Heart left ventricle (tissue), 16 donors: ENCODE measurements at regions of chr1 and their contacts with region 1.

Region 1: DNA sequence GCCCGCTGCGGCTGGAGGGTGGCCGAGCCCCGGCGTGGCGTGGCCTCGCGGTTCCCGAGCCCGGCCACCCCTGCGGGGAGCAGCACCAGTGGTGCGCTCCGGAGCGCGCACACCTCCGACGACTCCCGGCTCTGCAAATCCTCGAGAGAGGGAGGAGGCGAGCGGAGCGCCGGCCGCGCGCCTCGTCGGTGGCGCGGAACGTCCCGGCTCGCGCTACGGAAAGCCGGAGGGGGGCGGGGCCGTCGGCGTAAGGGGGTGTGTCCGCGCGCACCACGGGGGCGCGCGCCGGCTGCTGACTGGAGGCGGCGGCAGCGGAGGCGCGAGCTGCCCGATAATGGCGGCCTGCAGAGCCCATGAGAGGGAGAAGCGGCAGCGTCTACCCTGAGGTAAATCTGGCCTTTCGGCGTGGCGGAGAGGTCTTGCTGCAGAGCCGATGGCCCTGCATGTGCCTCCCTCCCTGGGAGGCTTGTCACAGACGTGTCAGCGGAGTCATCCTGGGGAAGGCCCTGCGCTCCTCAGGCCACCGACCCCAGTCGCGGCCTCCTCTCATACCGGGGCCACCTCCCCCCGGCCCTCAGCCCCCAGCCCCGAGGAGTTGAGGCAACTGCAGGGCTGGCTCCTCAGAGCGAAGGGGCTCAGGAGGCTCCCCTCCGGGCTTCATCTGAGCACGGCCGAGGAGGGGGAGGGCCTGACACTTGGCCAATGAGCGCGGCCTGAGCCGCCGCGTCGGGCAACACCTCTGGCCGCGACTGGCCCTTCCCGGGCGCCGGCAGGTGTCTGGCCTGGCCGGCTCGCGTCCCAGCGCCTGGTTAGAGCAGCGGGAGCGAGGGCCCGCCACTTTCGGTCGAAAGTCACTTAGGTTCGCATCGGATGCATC is at the start of gene PDIK1L:
- DNase-seq: peak; percentile 95 to 97 (median 96)
- ATAC-seq: peak; percentile 84 to 94 (median 92)
- H3K4me3 ChIP-seq: peak within 1 kb of the TSS; percentile 61 to 99 (median 96)
- H3K27ac ChIP-seq: peak within 1 kb of the TSS; percentile 86 to 99 (median 97)
- H3K4me1 ChIP-seq: peaks cover 0 to 40% (median 30%) of the 10 kb centered on the region in 12 donors
- H3K27me3 ChIP-seq: no peaks in the 10 kb centered on the region
- CTCF ChIP-seq: peak in 2 of 12 donors; percentile 13 to 18
- POLR2A ChIP-seq: peak in 1 of 2 donors; percentile 73
- total RNA-seq, gene PDIK1L: 3.9 to 9.3 (median 6.0) TPM

Region 2: DNA sequence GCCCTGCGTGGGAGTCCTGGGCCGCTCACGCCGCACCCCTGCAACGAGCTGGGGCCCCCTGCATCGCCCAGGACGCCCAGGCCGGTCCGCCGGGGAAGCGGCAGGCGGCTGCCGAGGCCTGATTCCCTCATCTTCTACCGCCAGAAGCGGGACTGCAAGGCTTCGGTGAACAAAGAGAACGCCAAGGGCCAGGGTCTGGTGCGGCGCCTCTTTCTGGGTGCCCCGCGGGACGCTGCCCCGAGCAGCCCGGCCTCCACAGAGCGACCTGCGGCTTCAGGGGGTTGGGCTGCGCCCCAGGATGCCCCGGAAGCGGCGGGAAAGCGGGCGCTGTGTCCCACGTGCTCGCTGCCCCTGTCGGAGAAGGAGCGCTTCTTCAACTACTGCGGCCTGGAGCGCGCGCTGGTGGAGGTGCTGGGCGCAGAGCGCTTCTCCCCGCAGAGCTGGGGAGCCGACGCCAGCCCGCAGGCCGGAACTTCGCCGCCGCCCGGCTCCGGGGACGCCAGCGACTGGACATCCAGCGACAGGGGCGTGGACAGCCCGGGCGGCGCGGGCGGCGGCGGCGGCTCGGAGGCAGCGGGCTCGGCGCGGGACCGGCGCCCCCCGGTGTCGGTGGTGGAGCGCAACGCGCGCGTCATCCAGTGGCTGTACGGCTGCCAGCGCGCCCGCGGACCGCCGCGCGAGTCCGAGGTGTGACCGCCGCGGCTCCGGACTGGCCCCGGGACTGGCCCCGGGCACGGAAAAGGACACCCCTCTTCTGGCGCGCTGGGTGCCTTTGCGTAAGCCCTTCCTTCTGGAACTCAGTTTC is 49.8 kb after region 1 on chr1:
- intact Hi-C with region 1: loop called in 7 of 10 experiments (anchors 2 to 5 kb)
- DNase-seq: peak; percentile 77 to 87 (median 77)
- ATAC-seq: peak in 3 of 4 donors; percentile 25 to 69 (median 61)
- H3K4me3 ChIP-seq: peak overlapping the region; percentile 34 to 73 (median 60)
- H3K27ac ChIP-seq: peak overlapping the region in 11 of 12 donors; percentile 82 to 99 (median 92)
- H3K4me1 ChIP-seq: peaks cover 6 to 77% (median 44%) of the 10 kb centered on the region in 12 donors
- H3K27me3 ChIP-seq: peaks cover 0 to 38% (median 0%) of the 10 kb centered on the region in 9 donors
- CTCF ChIP-seq: peak in 6 of 12 donors; percentile 35 to 50 (median 44)
- POLR2A ChIP-seq: peak in 1 of 2 donors; percentile 64

Region 3: GRCh38 chr1:26233903-26234643 is 122.3 kb after region 1 on chr1 and contains the start of gene CEP85:
- intact Hi-C with region 1: loop called in 9 of 10 experiments (anchors 5 to 10 kb)
- DNase-seq: peak; percentile 97 to 99 (median 98)
- ATAC-seq: peak; percentile 99 to 100 (median 99)
- H3K4me3 ChIP-seq: peak within 1 kb of the TSS; percentile 48 to 90 (median 78)
- H3K27ac ChIP-seq: peak within 1 kb of the TSS; percentile 5 to 96 (median 93)
- H3K4me1 ChIP-seq: peaks cover 0 to 36% (median 11%) of the 10 kb centered on the region in 12 donors
- H3K27me3 ChIP-seq: no peaks in the 10 kb centered on the region
- CTCF ChIP-seq: peak; percentile 72 to 95 (median 86)
- POLR2A ChIP-seq: peak; percentile 61 to 93
- total RNA-seq, gene CEP85: 28.6 to 180 (median 48.7) TPM

Region 4: GRCh38 chr1:26321315-26322041 is 209.7 kb after region 1 on chr1:
- intact Hi-C with region 1: loop called in 7 of 10 experiments (anchors 2 to 10 kb)
- DNase-seq: peak; percentile 89 to 95 (median 92)
- ATAC-seq: peak; percentile 82 to 94 (median 92)
- H3K4me3 ChIP-seq: peak overlapping the region in 2 of 12 donors; percentile 30 to 34
- H3K27ac ChIP-seq: peak overlapping the region in 1 of 12 donors; percentile 60
- H3K4me1 ChIP-seq: peaks cover 0 to 47% (median 7%) of the 10 kb centered on the region in 12 donors
- H3K27me3 ChIP-seq: no peaks in the 10 kb centered on the region
- CTCF ChIP-seq: peak; percentile 81 to 92 (median 90)
- POLR2A ChIP-seq: no peak

Region 5: DNA sequence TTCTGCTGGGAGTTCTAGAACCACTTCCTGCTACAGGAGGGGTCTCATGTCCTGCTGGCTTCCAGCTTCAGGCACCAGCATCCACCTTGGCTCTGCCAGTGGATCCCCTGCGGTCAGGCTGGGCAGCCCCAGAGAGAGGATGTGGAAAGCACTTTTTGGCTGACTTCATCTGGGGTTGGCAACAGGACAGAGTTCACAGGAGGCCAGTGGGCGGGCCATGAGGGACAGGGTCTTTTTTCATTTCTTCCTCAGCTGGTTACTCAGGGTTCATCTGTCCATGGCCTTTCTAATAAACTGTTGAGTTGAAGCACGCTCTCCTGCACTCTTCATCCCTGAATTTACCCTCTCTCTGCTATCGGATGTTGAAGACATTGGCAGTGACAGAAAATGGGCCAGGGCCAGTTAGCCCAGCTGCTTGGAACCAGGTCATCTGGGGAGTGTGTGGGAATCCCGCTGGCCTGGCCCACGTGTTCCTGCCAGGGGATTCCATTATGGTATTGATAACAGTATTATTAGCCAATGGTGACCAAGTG is 463.0 kb after region 1 on chr1:
- intact Hi-C with region 1: no loop called
- DNase-seq: peak in 1 of 5 donors; percentile 43
- ATAC-seq: peak in 3 of 4 donors; percentile 56 to 61 (median 58)
- H3K4me3 ChIP-seq: no peak overlapping the region
- H3K27ac ChIP-seq: peak overlapping the region in 1 of 12 donors; percentile 25
- H3K4me1 ChIP-seq: peaks cover 0 to 14% (median 7%) of the 10 kb centered on the region in 12 donors
- H3K27me3 ChIP-seq: peaks cover 0 to 3% (median 0%) of the 10 kb centered on the region in 9 donors
- CTCF ChIP-seq: no peak
- POLR2A ChIP-seq: no peak

Region 6: GRCh38 chr1:27872059-27872801 is 1760.5 kb after region 1 on chr1 and contains the start of gene THEMIS2:
- intact Hi-C with region 1: no loop called
- DNase-seq: peak; percentile 70 to 90 (median 76)
- ATAC-seq: peak; percentile 49 to 90 (median 82)
- H3K4me3 ChIP-seq: peak within 1 kb of the TSS; percentile 43 to 89 (median 64)
- H3K27ac ChIP-seq: peak within 1 kb of the TSS in 10 of 12 donors; percentile 21 to 88 (median 68)
- H3K4me1 ChIP-seq: peaks cover 0 to 58% (median 2%) of the 10 kb centered on the region in 12 donors
- H3K27me3 ChIP-seq: peaks cover 0 to 10% (median 0%) of the 10 kb centered on the region in 9 donors
- CTCF ChIP-seq: no peak
- POLR2A ChIP-seq: peak in 1 of 2 donors; percentile 53
- total RNA-seq, gene THEMIS2: 1.7 to 50.8 (median 6.1) TPM